ENCODE measurements at regions of chr7 and their contacts with region 1.

Region 1: GRCh38 chr7:113118074-113118959 is at the start of gene SMIM30:
- H3K4me3 Mint-ChIP-seq: peak within 1 kb of the TSS; percentile 79
- H3K27ac Mint-ChIP-seq: peak within 1 kb of the TSS; percentile 90
- H3K4me1 Mint-ChIP-seq: peaks cover 25% of the 10 kb centered on the region
- H3K27me3 Mint-ChIP-seq: no peaks in the 10 kb centered on the region

Region 2: GRCh38 chr7:112789817-112790585 is 328.3 kb before region 1 on chr7 and contains the start of gene TMEM168:
- intact Hi-C with region 1: loop called (anchors 10 kb)
- H3K4me3 Mint-ChIP-seq: peak within 1 kb of the TSS; percentile 88
- H3K27ac Mint-ChIP-seq: peak within 1 kb of the TSS; percentile 93
- H3K4me1 Mint-ChIP-seq: peaks cover 19% of the 10 kb centered on the region
- H3K27me3 Mint-ChIP-seq: no peaks in the 10 kb centered on the region

Region 3: DNA sequence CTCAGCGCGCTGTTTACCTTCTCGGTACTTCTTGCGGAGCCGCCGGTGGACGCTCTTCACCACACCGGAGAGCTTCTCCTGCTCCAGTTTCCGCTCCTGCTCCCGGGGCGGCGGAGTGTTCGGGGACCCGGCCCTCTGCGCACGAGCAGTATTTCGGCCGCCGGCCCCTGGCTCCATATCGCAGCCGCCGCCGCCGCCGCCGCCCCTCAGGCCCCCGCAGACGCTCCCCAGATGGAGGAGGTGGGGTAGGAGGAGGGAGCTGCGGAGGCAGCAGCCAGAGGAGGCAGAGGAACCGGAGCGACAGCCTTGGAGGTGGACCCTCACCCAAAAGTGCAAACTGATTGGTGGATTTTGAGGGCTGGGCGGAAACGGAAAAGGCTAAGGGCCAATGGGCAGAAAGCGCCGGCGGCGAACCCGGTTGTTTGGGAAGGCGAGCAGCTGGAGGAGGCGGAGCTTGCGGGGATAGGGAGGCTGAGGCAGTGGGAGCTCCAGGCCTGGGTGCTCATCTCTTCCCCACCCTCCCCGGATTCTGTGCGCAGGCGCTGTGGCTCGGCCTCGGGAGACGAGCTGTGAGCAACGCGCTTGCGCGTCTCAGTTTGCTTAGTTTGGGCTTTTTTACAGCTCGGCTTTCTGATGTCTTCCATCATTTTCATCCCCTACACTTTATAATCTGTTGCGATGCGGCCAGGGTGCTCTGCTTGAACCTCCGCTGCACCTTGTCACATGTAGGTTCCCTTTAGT is 178.6 kb before region 1 on chr7:
- intact Hi-C with region 1: loop called (anchors 2 kb)
- H3K4me3 Mint-ChIP-seq: peak overlapping the region; percentile 94
- H3K27ac Mint-ChIP-seq: peak overlapping the region; percentile 94
- H3K4me1 Mint-ChIP-seq: peaks cover 25% of the 10 kb centered on the region
- H3K27me3 Mint-ChIP-seq: peaks cover 3% of the 10 kb centered on the region

Region 4: GRCh38 chr7:113071465-113071864 is 46.9 kb before region 1 on chr7:
- intact Hi-C with region 1: loop called (anchors 10 kb)
- H3K4me3 Mint-ChIP-seq: no peak overlapping the region
- H3K27ac Mint-ChIP-seq: no peak overlapping the region
- H3K4me1 Mint-ChIP-seq: no peaks in the 10 kb centered on the region
- H3K27me3 Mint-ChIP-seq: peaks cover 1% of the 10 kb centered on the region